Gastrocnemius medialis (tissue), 4 donors: ENCODE measurements at regions of chr2 and their contacts with region 1.

Region 1: GRCh38 chr2:208254871-208255556 is at the start of gene IDH1:
- DNase-seq: peak; percentile 89 to 91
- ATAC-seq: peak; percentile 89 to 91
- H3K4me3 ChIP-seq: peak within 1 kb of the TSS; percentile 63 to 81 (median 70)
- H3K27ac ChIP-seq: peak within 1 kb of the TSS; percentile 82 to 90 (median 86)
- H3K4me1 ChIP-seq: peaks cover 16 to 19% of the 10 kb centered on the region in 2 donors
- H3K27me3 ChIP-seq: no peaks in the 10 kb centered on the region
- CTCF ChIP-seq: peak in 3 of 5 experiments; percentile 19 to 44 (median 25)
- POLR2A ChIP-seq: peak in 1 of 2 donors; percentile 53
- total RNA-seq, gene IDH1: 11.2 to 39.0 (median 15.0) TPM

Region 2: GRCh38 chr2:207529330-207530159 is 725.5 kb before region 1 on chr2 and contains the start of gene CREB1:
- in situ Hi-C with region 1: loop called in 1 of 4 experiments (anchors 25 kb)
- intact Hi-C with region 1: no loop called
- DNase-seq: peak; percentile 98
- ATAC-seq: peak; percentile 89 to 92
- H3K4me3 ChIP-seq: peak within 1 kb of the TSS; percentile 80 to 93 (median 86)
- H3K27ac ChIP-seq: peak within 1 kb of the TSS; percentile 94 to 95 (median 94)
- H3K4me1 ChIP-seq: peaks cover 29 to 41% of the 10 kb centered on the region in 2 donors
- H3K27me3 ChIP-seq: no peaks in the 10 kb centered on the region
- CTCF ChIP-seq: peak in 1 of 5 experiments; percentile 6
- POLR2A ChIP-seq: peak; percentile 95 to 99
- total RNA-seq, gene CREB1: 11.5 to 19.9 (median 19.8) TPM

Region 3: GRCh38 chr2:207854484-207855440 is 400.3 kb before region 1 on chr2:
- in situ Hi-C with region 1: no loop called
- intact Hi-C with region 1: no loop called
- DNase-seq: no peak
- ATAC-seq: no peak
- H3K4me3 ChIP-seq: no peak overlapping the region
- H3K27ac ChIP-seq: no peak overlapping the region
- H3K4me1 ChIP-seq: no peaks in the 10 kb centered on the region
- H3K27me3 ChIP-seq: no peaks in the 10 kb centered on the region
- CTCF ChIP-seq: no peak
- POLR2A ChIP-seq: no peak

Region 4: GRCh38 chr2:208033758-208034502 is 221.1 kb before region 1 on chr2:
- in situ Hi-C with region 1: no loop called
- intact Hi-C with region 1: loop called (anchors 5 kb)
- DNase-seq: peak in 1 of 2 donors; percentile 15
- ATAC-seq: peak in 1 of 2 donors; percentile 44
- H3K4me3 ChIP-seq: no peak overlapping the region
- H3K27ac ChIP-seq: no peak overlapping the region
- H3K4me1 ChIP-seq: no peaks in the 10 kb centered on the region
- H3K27me3 ChIP-seq: no peaks in the 10 kb centered on the region
- CTCF ChIP-seq: no peak
- POLR2A ChIP-seq: no peak

Region 5: DNA sequence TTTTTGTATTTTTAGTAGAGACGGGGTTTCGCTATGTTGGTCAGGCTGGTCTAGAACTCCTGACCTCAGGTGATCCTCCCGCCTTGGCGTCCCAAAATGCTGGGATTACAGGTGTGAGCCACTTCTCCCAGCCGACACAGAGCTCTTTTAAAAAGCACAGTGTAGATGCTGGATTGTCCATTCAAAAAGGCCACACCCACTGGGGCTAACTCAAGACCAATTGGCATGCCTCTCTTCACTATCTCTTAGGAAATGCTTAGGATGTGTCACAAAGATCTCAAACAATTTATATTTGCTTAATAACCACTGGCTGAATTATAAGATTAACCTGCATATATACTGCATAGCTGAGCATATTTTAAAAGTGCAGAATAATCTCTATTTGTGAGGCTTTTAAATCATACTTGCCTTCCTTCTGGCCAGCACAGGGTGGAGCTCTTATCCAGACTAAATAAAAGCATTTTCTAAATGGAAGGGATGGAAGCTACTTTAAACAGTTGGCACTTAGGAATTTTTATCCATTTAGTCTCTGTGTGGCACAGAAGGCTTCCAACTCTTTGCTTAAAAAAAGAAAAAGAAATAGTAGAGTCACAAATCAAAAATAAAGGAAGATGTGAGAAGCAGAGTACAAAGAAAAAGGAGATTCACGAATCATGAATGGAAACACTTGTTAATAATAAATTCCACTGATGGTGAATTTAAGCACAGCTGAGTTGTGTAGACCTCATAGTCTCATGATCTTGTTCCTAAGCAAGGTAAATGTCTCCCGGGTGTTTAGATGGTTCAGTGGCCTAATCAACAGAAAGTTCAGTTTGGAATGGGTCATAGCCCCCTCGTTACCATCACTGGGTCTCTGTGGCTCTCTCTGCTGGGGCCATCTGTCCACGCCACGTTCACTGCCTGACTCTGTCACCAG is 153.0 kb before region 1 on chr2:
- in situ Hi-C with region 1: no loop called
- intact Hi-C with region 1: no loop called
- DNase-seq: no peak
- ATAC-seq: no peak
- H3K4me3 ChIP-seq: no peak overlapping the region
- H3K27ac ChIP-seq: no peak overlapping the region
- H3K4me1 ChIP-seq: no peaks in the 10 kb centered on the region
- H3K27me3 ChIP-seq: no peaks in the 10 kb centered on the region
- CTCF ChIP-seq: no peak
- POLR2A ChIP-seq: no peak

Region 6: DNA sequence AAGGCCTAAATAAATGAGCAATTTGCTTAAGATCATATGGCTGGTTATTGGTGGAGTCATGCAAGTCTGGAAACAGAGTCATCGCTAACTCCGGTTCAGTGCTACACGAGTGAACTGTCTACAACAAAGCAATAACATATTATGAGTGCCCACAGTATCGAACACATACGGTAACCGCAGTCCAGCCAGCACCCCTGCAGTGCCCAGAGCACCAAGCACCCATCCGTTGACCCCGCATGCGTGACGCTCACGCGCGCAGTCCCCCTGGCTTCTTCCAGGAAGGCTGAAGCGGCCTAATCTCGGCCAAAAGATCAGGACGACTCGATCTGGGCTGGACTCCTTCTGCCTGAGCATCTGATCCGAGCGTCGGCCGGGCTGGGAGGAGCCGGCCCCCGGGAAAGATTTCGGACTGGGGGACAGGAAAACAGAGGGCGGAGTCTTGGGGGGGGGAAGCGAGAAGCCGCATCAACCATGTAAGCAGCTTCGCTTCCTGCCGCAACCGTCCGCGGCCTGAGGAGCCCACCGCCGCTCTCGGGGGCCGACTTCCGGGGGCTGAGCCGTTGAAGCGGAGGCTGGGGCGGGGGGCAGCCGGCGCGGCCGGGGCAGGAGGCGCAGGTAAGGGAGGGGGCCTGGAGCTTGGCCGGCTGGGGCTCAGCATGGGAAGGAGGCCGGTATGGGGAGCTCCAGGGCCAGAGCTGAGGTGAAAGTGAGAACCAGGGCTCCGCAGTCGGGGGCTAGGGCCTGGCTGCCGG is 11.0 kb after region 1 on chr2 and contains the start of gene PIKFYVE:
- in situ Hi-C with region 1: no loop called
- intact Hi-C with region 1: loop called (anchors 1 kb)
- DNase-seq: peak; percentile 94 to 95
- ATAC-seq: peak; percentile 94 to 97
- H3K4me3 ChIP-seq: peak within 1 kb of the TSS; percentile 71 to 97 (median 96)
- H3K27ac ChIP-seq: peak within 1 kb of the TSS; percentile 91 to 100 (median 98)
- H3K4me1 ChIP-seq: peaks cover 33 to 39% of the 10 kb centered on the region in 2 donors
- H3K27me3 ChIP-seq: no peaks in the 10 kb centered on the region
- CTCF ChIP-seq: peak in 1 of 5 experiments; percentile 18
- POLR2A ChIP-seq: peak; percentile 83 to 88
- total RNA-seq, gene PIKFYVE: 14.0 to 23.9 (median 17.9) TPM

Region 7: GRCh38 chr2:208320686-208321085 is 65.7 kb after region 1 on chr2:
- in situ Hi-C with region 1: no loop called
- intact Hi-C with region 1: loop called (anchors 1 kb)
- DNase-seq: peak; percentile 47 to 75
- ATAC-seq: peak; percentile 100
- H3K4me3 ChIP-seq: no peak overlapping the region
- H3K27ac ChIP-seq: peak overlapping the region; percentile 78 to 89 (median 82)
- H3K4me1 ChIP-seq: peaks cover 41 to 42% of the 10 kb centered on the region in 2 donors
- H3K27me3 ChIP-seq: no peaks in the 10 kb centered on the region
- CTCF ChIP-seq: no peak
- POLR2A ChIP-seq: no peak